ENCODE measurements at regions of chr4 and their contacts with region 1.

Region 1: GRCh38 chr4:1200425-1201035 is 28.1 kb upstream of the SPON2 start:
- DNase-seq: peak; percentile 51
- ATAC-seq: no peak
- H3K4me3 Mint-ChIP-seq: peak overlapping the region; percentile 74
- H3K27ac Mint-ChIP-seq: peak overlapping the region; percentile 73
- H3K4me1 Mint-ChIP-seq: peaks cover 40% of the 10 kb centered on the region
- H3K27me3 Mint-ChIP-seq: no peaks in the 10 kb centered on the region

Region 2: DNA sequence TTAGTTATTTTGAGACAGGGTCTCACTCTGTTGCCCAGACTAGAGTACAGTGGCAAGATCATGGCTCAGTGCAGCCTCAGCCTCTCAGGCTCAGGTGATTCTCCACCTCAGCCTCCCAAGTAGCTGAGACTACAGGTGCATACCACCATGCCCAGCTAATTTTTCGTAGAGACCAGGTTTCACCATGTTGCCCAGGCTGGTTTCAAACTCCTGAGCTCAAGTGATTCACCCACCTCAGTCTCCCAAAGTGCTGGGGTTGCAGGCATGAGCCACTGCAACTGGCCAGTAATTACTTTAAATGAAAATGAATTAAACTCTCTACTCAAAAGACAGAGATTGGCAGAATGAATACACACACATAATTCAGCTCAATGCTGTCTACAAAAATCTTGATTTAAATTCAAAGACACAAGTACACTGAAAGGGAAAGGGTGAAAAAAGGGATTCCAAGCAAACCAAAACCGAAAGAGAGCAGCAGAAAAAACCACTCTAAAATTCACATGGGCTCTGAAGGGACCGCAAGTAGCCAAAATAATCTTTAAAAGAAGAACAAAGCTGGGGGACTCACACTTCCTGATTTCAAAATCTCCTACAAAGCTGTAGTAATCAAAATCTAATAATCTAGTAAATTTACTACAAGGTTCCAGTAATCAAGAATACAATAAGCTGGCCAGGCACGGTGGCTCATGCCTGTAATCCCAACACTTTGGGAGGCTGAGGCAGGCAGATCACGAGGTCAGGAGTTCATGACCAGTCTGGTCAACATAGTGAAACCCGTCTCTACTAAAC is 16.4 kb before region 1 on chr4:
- CTCF ChIA-PET with region 1: interaction called, 4 read pairs
- POLR2A ChIA-PET with region 1: interaction called, 3 read pairs
- intact Hi-C with region 1: loop called (anchors 1 to 2 kb)
- DNase-seq: peak; percentile 4
- ATAC-seq: no peak
- H3K4me3 Mint-ChIP-seq: no peak overlapping the region
- H3K27ac Mint-ChIP-seq: no peak overlapping the region
- H3K4me1 Mint-ChIP-seq: peaks cover 13% of the 10 kb centered on the region
- H3K27me3 Mint-ChIP-seq: peaks cover 3% of the 10 kb centered on the region

Region 3: DNA sequence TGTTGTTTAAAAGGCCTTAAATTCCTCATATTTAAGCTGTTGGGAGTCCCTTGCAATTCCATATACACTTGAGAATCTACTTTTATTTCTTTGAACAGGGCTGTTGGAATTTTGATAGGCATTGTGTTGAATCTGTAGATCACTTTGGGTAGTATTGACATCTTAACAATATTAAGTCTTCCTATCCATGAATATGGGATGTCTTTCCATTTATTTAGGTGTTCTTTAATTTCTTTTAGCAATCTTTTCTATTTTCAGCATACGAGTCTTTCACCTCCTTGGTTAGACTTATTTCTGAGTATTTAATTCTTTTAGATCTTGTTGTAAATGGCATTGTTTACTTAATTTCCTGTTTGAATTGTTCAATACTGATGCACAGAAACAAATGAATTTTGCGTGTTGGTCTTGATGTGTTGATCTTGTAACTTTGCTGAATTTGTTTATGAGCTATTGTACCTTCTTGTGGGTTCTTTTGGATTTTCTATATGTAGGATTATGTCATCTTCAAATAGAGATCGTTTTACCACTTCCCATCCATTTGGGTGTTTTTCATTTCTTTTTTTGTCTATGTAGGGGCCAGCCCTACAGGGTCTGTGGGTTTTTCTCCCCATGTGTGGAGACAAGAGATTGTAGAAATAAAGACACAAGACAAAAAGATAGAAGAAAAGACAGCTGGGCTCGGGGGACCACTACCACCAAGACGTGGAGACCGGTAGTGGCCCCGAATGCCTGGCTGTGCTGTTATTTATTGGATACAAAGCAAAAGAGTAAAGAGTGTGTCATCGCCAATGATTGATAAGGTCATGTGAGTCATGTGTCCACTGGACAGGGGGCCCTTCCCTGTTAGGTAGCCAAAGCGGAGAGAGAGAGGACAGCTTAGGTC is 66.6 kb after region 1 on chr4:
- CTCF ChIA-PET with region 1: interaction called, 3 read pairs
- POLR2A ChIA-PET with region 1: no interaction called
- intact Hi-C with region 1: loop called in 1 of 2 experiments (anchors 5 kb)
- DNase-seq: peak; percentile 29
- ATAC-seq: peak; percentile 71
- H3K4me3 Mint-ChIP-seq: peak overlapping the region; percentile 63
- H3K27ac Mint-ChIP-seq: peak overlapping the region; percentile 90
- H3K4me1 Mint-ChIP-seq: peaks cover 13% of the 10 kb centered on the region
- H3K27me3 Mint-ChIP-seq: no peaks in the 10 kb centered on the region

Measured in activated CD4-positive, alpha-beta T cell treated with anti-CD3 and anti-CD28 coated beads for 36 hours (primary cell).